Activated T-helper 2 cell treated with anti-CD3 and anti-CD28 coated beads, Interferon-gamma antibody, Interleukin-2, Interleukin-4, amounts not matched to agents 10 μg/mL and 5 μg/mL and 100 μg/mL, durations not matched to agents 14 hours and 24 hours and 36 hours (primary cell): ENCODE measurements at regions of chr2 and their contacts with region 1.

Region 1: GRCh38 chr2:126527836-126528507 is 128.0 kb upstream of the GYPC start:
- DNase-seq: peak; percentile 34
- H3K4me3 Mint-ChIP-seq: no peak overlapping the region
- H3K27ac Mint-ChIP-seq: no peak overlapping the region
- H3K4me1 Mint-ChIP-seq: no peaks in the 10 kb centered on the region
- H3K27me3 Mint-ChIP-seq: peaks cover 2% of the 10 kb centered on the region

Region 2: GRCh38 chr2:126971481-126972278 is 443.7 kb after region 1 on chr2:
- intact Hi-C with region 1: loop called (anchors 10 kb)
- DNase-seq: peak; percentile 49
- H3K4me3 Mint-ChIP-seq: no peak overlapping the region
- H3K27ac Mint-ChIP-seq: no peak overlapping the region
- H3K4me1 Mint-ChIP-seq: no peaks in the 10 kb centered on the region
- H3K27me3 Mint-ChIP-seq: peaks cover 46% of the 10 kb centered on the region